ENCODE measurements at regions of chr11 and their contacts with region 1.

Region 1: GRCh38 chr11:1837171-1838076 is 1.4 kb upstream of the TNNI2 start:
- DNase-seq: no peak
- H3K4me3 ChIP-seq: no peak overlapping the region
- H3K27ac ChIP-seq: no peak overlapping the region
- H3K4me1 ChIP-seq: peaks cover 0 to 28% (median 8%) of the 10 kb centered on the region in 4 donors
- H3K27me3 ChIP-seq: peaks cover 0 to 5% of the 10 kb centered on the region in 2 donors
- CTCF ChIP-seq: peak; percentile 88 to 91

Region 2: DNA sequence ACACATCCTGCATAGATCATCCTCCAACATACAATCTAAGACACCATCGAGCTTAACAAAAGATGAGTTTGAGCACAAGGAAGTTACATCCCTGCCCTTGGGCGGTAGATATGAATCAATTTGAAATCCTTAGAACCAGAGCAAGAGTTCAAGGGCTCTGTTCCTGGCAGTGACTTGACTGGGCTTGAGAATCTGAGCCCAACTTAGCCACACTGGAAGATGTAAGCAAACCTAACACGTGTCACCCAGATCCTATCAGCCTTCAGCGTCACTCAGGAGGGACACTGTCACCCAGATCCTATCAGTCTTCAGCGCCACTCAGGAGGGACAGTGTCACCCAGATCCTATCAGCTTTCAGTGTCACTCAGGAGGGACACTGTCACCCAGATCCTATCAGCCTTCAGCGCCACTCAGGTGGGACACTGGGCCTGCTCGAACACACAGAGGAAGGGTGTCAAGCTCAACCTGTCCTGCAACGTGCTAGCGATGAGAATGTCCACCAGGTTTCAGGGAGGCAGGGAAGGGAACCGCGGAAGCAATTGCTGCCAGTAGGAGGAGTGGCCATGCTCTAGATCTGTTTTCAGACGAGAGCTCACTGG is 40.9 kb before region 1 on chr11:
- intact Hi-C with region 1: no loop called
- DNase-seq: no peak
- H3K4me3 ChIP-seq: no peak overlapping the region
- H3K27ac ChIP-seq: no peak overlapping the region
- H3K4me1 ChIP-seq: no peaks in the 10 kb centered on the region
- H3K27me3 ChIP-seq: peaks cover 0 to 22% of the 10 kb centered on the region in 2 donors
- CTCF ChIP-seq: no peak

Region 3: DNA sequence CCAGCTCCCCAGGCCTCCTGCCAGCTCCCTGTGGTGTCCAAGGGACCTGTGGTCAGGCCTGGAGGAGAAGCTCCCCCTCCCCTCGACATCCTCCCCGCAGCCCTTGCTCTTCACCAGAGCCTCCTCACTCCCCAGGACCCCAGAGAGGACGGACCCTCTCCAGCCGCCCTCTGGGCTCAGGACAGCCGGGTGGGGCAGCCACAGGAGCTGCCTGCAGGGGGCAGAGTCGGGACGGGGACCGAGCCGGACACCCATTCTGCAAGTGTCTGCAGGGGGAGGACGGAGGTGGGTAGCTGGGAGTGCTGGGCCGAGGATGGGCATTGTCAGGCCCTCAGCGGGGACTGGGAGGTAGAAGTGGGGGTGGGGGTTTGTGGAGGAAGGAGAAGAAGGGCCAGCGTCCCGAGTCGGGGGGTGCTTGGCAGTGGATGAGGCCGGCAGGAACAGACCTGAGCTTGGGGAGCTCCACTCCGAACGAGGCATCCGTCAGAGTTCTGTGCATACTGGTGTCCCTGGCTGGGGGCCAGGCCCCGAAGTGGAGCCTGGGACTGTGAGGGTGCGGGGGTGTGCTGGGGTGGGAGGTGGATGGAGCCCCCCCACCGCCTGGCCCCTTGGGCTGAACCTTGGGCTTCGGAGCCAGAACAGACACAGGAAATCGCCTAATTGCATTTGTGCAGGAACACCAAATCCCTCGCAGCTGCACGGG is 39.1 kb after region 1 on chr11:
- intact Hi-C with region 1: loop called (anchors 5 kb)
- DNase-seq: peak; percentile 47 to 80
- H3K4me3 ChIP-seq: no peak overlapping the region
- H3K27ac ChIP-seq: peak overlapping the region; percentile 50 to 68
- H3K4me1 ChIP-seq: peaks cover 0 to 58% (median 25%) of the 10 kb centered on the region in 4 donors
- H3K27me3 ChIP-seq: peaks cover 0 to 23% of the 10 kb centered on the region in 2 donors
- CTCF ChIP-seq: peak; percentile 20 to 32

Region 4: GRCh38 chr11:1887996-1888753 is 50.8 kb after region 1 on chr11:
- intact Hi-C with region 1: loop called (anchors 2 kb)
- DNase-seq: no peak
- H3K4me3 ChIP-seq: no peak overlapping the region
- H3K27ac ChIP-seq: no peak overlapping the region
- H3K4me1 ChIP-seq: peaks cover 0 to 5% (median 0%) of the 10 kb centered on the region in 4 donors
- H3K27me3 ChIP-seq: peaks cover 0 to 15% of the 10 kb centered on the region in 2 donors
- CTCF ChIP-seq: no peak

Region 5: DNA sequence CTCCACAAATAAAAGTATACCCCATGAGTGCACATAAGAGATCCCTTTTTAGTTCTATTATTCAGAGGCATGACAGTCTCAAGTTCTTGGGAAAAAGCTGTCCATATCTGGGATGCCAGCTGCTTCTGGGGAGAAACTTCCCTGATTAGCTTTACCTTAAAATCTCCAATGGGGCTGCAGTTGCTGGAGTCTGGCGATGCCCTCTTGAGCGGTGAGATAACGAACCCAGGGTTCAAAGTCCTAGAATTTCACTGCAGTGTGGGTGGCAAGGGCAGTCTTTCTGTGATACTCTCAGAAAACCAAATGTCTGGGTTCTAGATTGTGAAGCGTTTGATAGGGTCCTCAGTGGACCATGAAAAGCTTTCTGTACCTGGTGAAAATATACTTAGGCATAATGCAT is 61.7 kb after region 1 on chr11:
- intact Hi-C with region 1: no loop called
- DNase-seq: no peak
- H3K4me3 ChIP-seq: no peak overlapping the region
- H3K27ac ChIP-seq: no peak overlapping the region
- H3K4me1 ChIP-seq: no peaks in the 10 kb centered on the region
- H3K27me3 ChIP-seq: peaks cover 0 to 11% of the 10 kb centered on the region in 2 donors
- CTCF ChIP-seq: no peak